GM12878 (cell line): ENCODE measurements at regions of chr12 and their contacts with region 1.

Region 1: DNA sequence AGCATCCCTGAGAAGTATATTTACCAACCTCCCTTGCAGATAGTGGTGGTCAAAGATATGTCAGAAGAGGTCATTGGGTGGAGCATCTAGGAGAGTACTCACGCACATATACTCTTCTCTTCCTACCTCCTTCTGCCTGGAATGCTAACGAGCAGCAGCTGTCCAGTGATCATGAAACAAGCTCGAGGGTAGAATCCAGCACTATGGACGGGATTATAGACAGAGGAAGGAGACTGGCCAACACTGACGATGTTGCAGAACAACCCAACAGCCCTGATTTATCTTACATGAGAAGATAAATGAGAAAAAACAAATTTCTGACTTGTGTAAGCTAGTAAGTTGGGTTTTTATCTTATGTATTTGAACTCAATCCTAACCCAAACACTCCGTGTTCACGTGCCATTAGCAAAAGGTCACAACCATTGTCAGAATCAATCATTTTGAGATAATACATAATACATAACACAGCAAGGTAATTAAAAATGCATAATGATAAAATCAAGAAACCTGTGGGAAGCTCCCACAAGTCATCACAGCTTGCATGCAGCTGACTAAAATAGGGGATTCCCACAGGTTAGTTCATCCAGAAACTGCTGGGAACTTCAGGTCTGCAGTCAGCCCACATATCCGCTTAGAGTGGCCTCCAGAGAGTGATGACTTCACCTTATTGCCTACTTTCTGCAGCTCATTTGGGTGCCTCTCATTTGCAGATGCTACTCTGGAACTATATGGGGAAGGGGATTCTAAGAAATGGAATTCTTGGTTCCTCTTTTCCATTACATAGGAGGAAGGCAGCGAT is 36.3 kb upstream of the STK38L start:
- DNase-seq: peak; percentile 93
- ATAC-seq: peak; percentile 92
- H3K4me3 ChIP-seq: peak overlapping the region; percentile 44
- H3K27ac ChIP-seq: peak overlapping the region; percentile 97
- H3K4me1 ChIP-seq: peaks cover 35% of the 10 kb centered on the region
- H3K27me3 ChIP-seq: no peaks in the 10 kb centered on the region
- CTCF ChIP-seq: no peak
- EP300 ChIP-seq: peak; percentile 65 to 78; a peak in 3 of 4 replicates
- POLR2A ChIP-seq: no peak
- RAD21 ChIP-seq: peak; percentile 34; the same call in 1 of the 2 replicates

Region 2: GRCh38 chr12:27142101-27142721 is 65.6 kb before region 1 on chr12:
- CTCF ChIA-PET with region 1: interaction called, 6 read pairs
- POLR2A ChIA-PET with region 1: interaction called, 8 read pairs
- RAD21 ChIA-PET with region 1: interaction called, 12 read pairs
- SMC1A ChIA-PET with region 1: interaction called, 12 read pairs
- in situ Hi-C with region 1: no loop called
- intact Hi-C with region 1: loop called (anchors 2 kb)
- DNase-seq: no peak
- ATAC-seq: peak; percentile 80
- H3K4me3 ChIP-seq: no peak overlapping the region
- H3K27ac ChIP-seq: no peak overlapping the region
- H3K4me1 ChIP-seq: peaks cover 9% of the 10 kb centered on the region; the same call in 1 of the 2 replicates
- H3K27me3 ChIP-seq: no peaks in the 10 kb centered on the region
- CTCF ChIP-seq: peak; percentile 72 to 79 (median 76)
- EP300 ChIP-seq: no peak
- POLR2A ChIP-seq: no peak
- RAD21 ChIP-seq: peak; percentile 87

Region 3: GRCh38 chr12:27185234-27186021 is 22.4 kb before region 1 on chr12:
- CTCF ChIA-PET with region 1: interaction called, 24 read pairs
- POLR2A ChIA-PET with region 1: interaction called, 20 read pairs
- RAD21 ChIA-PET with region 1: interaction called, 79 read pairs
- SMC1A ChIA-PET with region 1: interaction called, 139 read pairs
- in situ Hi-C with region 1: no loop called
- intact Hi-C with region 1: loop called (anchors 1 kb)
- DNase-seq: peak; percentile 85
- ATAC-seq: peak; percentile 98
- H3K4me3 ChIP-seq: no peak overlapping the region
- H3K27ac ChIP-seq: peak overlapping the region; percentile 82
- H3K4me1 ChIP-seq: peaks cover 20% of the 10 kb centered on the region
- H3K27me3 ChIP-seq: no peaks in the 10 kb centered on the region
- CTCF ChIP-seq: no peak
- EP300 ChIP-seq: peak; percentile 24 to 61; a peak in 2 of 4 replicates
- POLR2A ChIP-seq: no peak
- RAD21 ChIP-seq: peak; percentile 23; the same call in 1 of the 2 replicates

Region 4: GRCh38 chr12:27252934-27253333 is 45.1 kb after region 1 on chr12:
- CTCF ChIA-PET with region 1: interaction called, 12 read pairs
- POLR2A ChIA-PET with region 1: interaction called, 8 read pairs
- RAD21 ChIA-PET with region 1: interaction called, 28 read pairs
- SMC1A ChIA-PET with region 1: interaction called, 21 read pairs
- in situ Hi-C with region 1: no loop called
- intact Hi-C with region 1: no loop called
- DNase-seq: no peak
- ATAC-seq: peak; percentile 56
- H3K4me3 ChIP-seq: no peak overlapping the region; the same call in 1 of the 2 replicates
- H3K27ac ChIP-seq: peak overlapping the region; percentile 48; the same call in 1 of the 2 replicates
- H3K4me1 ChIP-seq: 0 out of 2 replicates have a peak, but pooled peaks cover 5% of the 10 kb centered on the region
- H3K27me3 ChIP-seq: no peaks in the 10 kb centered on the region
- CTCF ChIP-seq: no peak
- EP300 ChIP-seq: no peak
- POLR2A ChIP-seq: no peak
- RAD21 ChIP-seq: no peak

Region 5: GRCh38 chr12:27284751-27285150 is 76.9 kb after region 1 on chr12:
- CTCF ChIA-PET with region 1: interaction called, 3 read pairs
- POLR2A ChIA-PET with region 1: interaction called, 11 read pairs
- RAD21 ChIA-PET with region 1: interaction called, 39 read pairs
- SMC1A ChIA-PET with region 1: interaction called, 29 read pairs
- in situ Hi-C with region 1: no loop called
- intact Hi-C with region 1: no loop called
- DNase-seq: peak; percentile 89
- ATAC-seq: peak; percentile 67
- H3K4me3 ChIP-seq: no peak overlapping the region
- H3K27ac ChIP-seq: peak overlapping the region; percentile 70; the same call in 1 of the 2 replicates
- H3K4me1 ChIP-seq: peaks cover 28% of the 10 kb centered on the region
- H3K27me3 ChIP-seq: no peaks in the 10 kb centered on the region
- CTCF ChIP-seq: no peak
- EP300 ChIP-seq: peak; percentile 69 to 77; a peak in 3 of 4 replicates
- POLR2A ChIP-seq: no peak
- RAD21 ChIP-seq: no peak